ENCODE measurements at regions of chr5 and their contacts with region 1.

Region 1: DNA sequence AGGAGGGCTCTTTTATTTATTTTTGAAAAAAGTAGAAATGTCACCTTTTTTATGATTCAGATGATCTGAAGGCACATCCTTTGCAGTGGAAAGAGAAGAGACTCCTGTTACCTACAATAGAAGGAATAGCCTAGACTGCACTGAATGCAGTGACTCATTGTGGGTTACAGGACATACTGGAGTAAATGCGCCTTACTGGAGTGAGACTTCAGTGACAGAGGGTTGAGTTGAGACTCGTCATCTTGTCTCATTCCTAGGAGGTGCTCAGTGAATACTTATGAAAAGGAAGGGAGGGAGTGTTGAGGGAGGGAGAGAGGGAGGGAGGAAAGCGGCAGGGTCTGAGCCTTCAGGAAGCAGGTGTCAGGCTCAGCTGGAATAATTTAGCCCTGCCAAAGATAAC is 25.2 kb downstream of the ANKRA2 start:
- DNase-seq: peak in 1 of 2 experiments; percentile 35
- ATAC-seq: peak; percentile 41 to 52; a peak in 3 of 6 replicates
- H3K4me3 ChIP-seq: no peak overlapping the region
- H3K27ac ChIP-seq: peak overlapping the region; percentile 80 to 84; a peak in 5 of 6 replicates
- H3K4me1 ChIP-seq: peaks cover 41% of the 10 kb centered on the region
- CTCF ChIP-seq: no peak
- EP300 ChIP-seq: no peak
- POLR2A ChIP-seq: no peak
- RAD21 ChIP-seq: no peak

Region 2: DNA sequence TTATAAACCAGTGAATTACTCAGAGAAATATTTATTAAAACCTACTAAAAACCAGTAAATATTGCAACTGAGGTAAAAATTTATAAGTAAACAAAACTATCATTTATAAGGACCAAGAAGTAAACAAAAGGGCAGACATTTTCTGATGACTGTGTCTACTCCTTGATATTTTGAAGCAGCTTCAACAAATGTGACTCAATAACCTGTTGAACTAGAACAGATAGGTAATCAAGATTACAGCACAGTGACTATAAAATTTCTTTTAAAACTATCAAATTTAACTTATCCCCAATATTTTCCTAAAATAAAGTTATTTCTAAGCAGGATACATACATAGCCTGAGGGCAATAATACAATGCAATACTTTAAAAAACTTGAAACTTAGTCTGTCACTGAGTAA is 12.4 kb after region 1 on chr5:
- CTCF ChIA-PET with region 1: interaction called, 26 read pairs
- POLR2A ChIA-PET with region 1: no interaction called
- DNase-seq: no peak
- ATAC-seq: no peak
- H3K4me3 ChIP-seq: no peak overlapping the region
- H3K27ac ChIP-seq: no peak overlapping the region
- H3K4me1 ChIP-seq: no peaks in the 10 kb centered on the region
- CTCF ChIP-seq: no peak
- EP300 ChIP-seq: no peak
- POLR2A ChIP-seq: no peak
- RAD21 ChIP-seq: no peak

Region 3: GRCh38 chr5:73693481-73694061 is 153.4 kb after region 1 on chr5:
- CTCF ChIA-PET with region 1: no interaction called
- POLR2A ChIA-PET with region 1: no interaction called
- DNase-seq: peak; percentile 40 to 50
- ATAC-seq: peak; percentile 54 to 75; a peak in 4 of 6 replicates
- H3K4me3 ChIP-seq: no peak overlapping the region
- H3K27ac ChIP-seq: peak overlapping the region; percentile 78 to 89
- H3K4me1 ChIP-seq: peaks cover 64% of the 10 kb centered on the region
- CTCF ChIP-seq: peak; percentile 73
- EP300 ChIP-seq: no peak
- POLR2A ChIP-seq: no peak
- RAD21 ChIP-seq: peak; percentile 58 to 72